Activated CD4-positive, alpha-beta T cell treated with anti-CD3 and anti-CD28 coated beads, Interleukin-2, amount 10 ng/mL, durations not matched to agents 24 days and 14 days (primary cell): ENCODE measurements at regions of chr22 and their contacts with region 1.

Region 1: GRCh38 chr22:40714192-40714951 is 35.1 kb downstream of the MCHR1 start:
- DNase-seq: no peak
- H3K4me3 Mint-ChIP-seq: no peak overlapping the region
- H3K27ac Mint-ChIP-seq: peak overlapping the region; percentile 34
- H3K4me1 Mint-ChIP-seq: peaks cover 24% of the 10 kb centered on the region
- H3K27me3 Mint-ChIP-seq: peaks cover 16% of the 10 kb centered on the region

Region 2: GRCh38 chr22:40651563-40652501 is 62.5 kb before region 1 on chr22:
- intact Hi-C with region 1: loop called (anchors 5 kb)
- DNase-seq: peak; percentile 91
- H3K4me3 Mint-ChIP-seq: peak overlapping the region; percentile 55
- H3K27ac Mint-ChIP-seq: peak overlapping the region; percentile 85
- H3K4me1 Mint-ChIP-seq: peaks cover 22% of the 10 kb centered on the region
- H3K27me3 Mint-ChIP-seq: no peaks in the 10 kb centered on the region

Region 3: DNA sequence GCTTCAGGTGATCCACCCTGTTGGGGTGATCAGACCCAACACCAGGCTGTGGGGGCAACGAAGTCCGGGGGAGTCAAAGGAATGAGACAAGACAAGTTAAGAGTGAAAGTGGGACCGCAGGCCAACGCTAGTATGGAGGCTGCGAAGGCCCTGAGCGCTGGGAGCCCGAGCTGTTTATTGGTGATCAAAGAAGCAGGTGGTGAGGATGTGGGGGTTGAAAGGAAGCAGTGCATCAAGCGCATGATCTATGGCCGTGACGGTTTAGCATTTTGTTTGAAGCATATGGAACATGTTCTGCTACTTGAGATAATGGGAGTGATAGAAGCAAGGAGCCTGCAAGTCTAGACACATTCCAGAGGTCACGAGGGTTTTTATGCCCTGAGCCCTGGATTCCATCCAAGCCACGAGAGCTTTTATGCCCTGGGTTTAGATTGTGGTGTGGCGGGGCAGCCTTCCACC is 14.4 kb after region 1 on chr22:
- intact Hi-C with region 1: loop called (anchors 1 kb)
- DNase-seq: peak; percentile 88
- H3K4me3 Mint-ChIP-seq: peak overlapping the region; percentile 69
- H3K27ac Mint-ChIP-seq: peak overlapping the region; percentile 95
- H3K4me1 Mint-ChIP-seq: peaks cover 41% of the 10 kb centered on the region
- H3K27me3 Mint-ChIP-seq: no peaks in the 10 kb centered on the region

Region 4: DNA sequence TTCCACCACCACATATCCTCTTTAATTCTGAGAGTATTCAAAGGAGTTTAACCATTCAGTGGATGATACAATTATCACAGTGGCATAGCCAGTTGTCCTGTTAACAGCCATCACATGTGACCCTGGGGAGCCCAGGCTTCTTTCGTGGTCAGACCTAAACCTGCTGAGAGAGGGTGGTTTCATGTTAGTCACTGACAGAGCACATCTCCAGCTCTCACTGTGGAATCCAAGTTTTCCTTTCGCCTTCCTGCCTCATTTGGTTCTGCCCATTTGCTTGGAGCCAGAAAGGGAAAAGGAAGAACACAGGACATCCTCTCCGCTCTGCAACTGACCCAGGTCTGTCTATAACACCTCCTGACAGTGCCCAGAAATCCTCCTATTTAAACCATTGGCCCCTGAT is 25.3 kb after region 1 on chr22:
- intact Hi-C with region 1: no loop called
- DNase-seq: no peak
- H3K4me3 Mint-ChIP-seq: no peak overlapping the region
- H3K27ac Mint-ChIP-seq: no peak overlapping the region
- H3K4me1 Mint-ChIP-seq: peaks cover 2% of the 10 kb centered on the region
- H3K27me3 Mint-ChIP-seq: peaks cover 3% of the 10 kb centered on the region

Region 5: DNA sequence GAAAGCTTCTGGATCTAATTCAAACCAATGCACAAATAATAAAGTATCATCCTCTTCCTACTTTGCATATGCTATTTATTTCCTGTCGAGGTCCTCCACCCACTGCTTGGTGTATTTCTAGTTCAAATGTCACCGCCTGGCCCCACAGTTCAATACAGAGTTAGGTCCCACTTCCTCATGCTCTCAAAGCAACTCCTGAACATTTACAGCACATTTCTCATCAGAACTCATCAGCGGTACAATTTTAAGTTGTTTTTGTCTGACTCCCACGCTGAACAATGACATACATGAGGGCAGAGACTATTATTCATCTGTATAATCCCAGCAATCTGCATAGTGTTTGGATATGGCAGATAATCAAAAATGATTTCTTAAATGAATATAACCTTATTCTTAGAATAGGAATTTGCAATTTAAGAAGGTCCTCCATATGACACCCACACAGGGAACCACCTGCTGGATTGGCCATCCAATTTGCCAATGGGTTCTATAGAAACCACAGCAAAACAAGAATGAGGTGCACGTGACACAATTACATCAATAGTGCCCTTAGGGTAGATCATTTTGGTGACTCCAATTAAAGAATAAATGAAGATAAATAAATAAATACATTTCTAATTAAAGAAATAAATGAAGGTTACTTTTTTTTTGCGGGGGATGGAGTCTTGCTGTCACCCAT is 50.5 kb after region 1 on chr22:
- intact Hi-C with region 1: loop called (anchors 1 kb)
- DNase-seq: peak; percentile 63
- H3K4me3 Mint-ChIP-seq: peak overlapping the region; percentile 64
- H3K27ac Mint-ChIP-seq: peak overlapping the region; percentile 94
- H3K4me1 Mint-ChIP-seq: peaks cover 16% of the 10 kb centered on the region
- H3K27me3 Mint-ChIP-seq: no peaks in the 10 kb centered on the region

Region 6: DNA sequence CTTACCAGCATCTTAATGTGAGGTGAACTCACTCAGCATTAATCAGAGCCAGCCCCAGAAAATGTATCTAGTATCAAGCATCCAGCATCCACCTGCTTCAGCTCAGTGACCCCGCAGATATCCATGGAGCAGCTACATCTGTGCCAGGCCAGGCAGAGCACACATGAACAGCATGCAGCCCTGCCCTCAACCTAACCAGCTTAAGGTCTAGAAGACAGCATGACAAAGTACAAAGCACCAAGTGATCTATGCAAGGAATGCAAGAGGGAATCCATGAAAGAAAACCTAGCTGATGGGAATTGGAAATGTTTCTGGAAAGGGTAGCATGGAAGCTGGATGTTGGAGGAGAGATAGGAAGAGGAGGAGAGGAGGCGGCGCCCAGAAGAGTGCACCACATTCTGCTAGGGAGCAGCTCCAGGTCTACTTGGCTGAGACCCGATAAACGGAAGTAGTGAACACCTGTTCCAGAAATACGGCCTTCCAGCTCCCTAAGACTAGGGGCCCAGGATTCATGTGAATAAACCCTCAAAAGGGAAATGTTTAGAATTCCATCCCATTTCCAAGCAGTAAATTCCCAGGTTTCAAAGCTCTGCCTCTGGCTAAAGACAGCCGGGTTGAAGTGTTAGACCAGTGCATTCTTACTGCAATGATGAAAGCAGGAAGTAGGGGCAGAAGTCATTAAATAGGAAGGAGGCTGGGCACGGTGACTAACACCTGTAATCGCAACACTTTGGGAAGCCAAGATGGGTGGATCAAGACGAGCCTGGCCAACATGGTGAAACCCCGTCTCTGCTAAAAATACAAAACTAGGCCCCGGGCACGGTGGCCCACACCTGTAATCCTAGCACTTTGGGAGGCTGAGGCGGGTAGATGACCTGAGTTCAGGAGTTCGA is 467.2 kb after region 1 on chr22:
- intact Hi-C with region 1: no loop called
- DNase-seq: no peak
- H3K4me3 Mint-ChIP-seq: no peak overlapping the region
- H3K27ac Mint-ChIP-seq: no peak overlapping the region
- H3K4me1 Mint-ChIP-seq: peaks cover 5% of the 10 kb centered on the region
- H3K27me3 Mint-ChIP-seq: no peaks in the 10 kb centered on the region